ENCODE measurements at regions of chr12 and their contacts with region 1.

Region 1: GRCh38 chr12:116277393-116278278 is at the start of gene MED13L:
- DNase-seq: peak; percentile 94
- ATAC-seq: peak; percentile 96
- total RNA-seq, gene MED13L: 59.8 TPM

Region 2: DNA sequence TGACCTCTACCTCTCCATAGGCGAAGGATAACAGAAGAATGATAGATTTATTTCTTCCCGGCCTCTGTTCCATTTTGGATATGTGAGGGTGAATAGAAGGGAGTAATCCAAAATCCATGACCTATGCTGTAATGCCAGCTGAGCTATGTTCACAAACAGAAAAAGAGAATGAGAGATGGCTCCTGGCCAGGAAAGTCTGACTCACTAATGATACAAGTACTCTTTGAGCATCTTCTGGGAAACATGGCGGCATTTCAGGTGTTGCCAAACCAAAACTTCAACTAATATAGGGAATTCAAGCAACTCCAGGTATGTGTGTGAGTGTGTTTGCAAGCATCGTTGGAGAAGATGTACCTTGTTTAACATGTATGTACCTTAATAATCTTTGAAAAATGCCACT is 55.3 kb before region 1 on chr12:
- intact Hi-C with region 1: no loop called
- DNase-seq: no peak
- ATAC-seq: peak; percentile 66

Region 3: GRCh38 chr12:116319898-116320621 is 42.4 kb after region 1 on chr12:
- intact Hi-C with region 1: loop called (anchors 2 kb)
- DNase-seq: no peak
- ATAC-seq: peak; percentile 92

Region 4: GRCh38 chr12:116358893-116359761 is 81.5 kb after region 1 on chr12:
- intact Hi-C with region 1: loop called (anchors 2 kb)
- DNase-seq: peak; percentile 96
- ATAC-seq: peak; percentile 96

Region 5: GRCh38 chr12:116406516-116406915 is 128.9 kb after region 1 on chr12:
- intact Hi-C with region 1: loop called (anchors 5 kb)
- DNase-seq: peak; percentile 94
- ATAC-seq: peak; percentile 96

Measured in Right ventricle myocardium inferior (tissue), 1 donor.